PC-9 (cell line): ENCODE measurements at regions of chr2 and their contacts with region 1.

Region 1: GRCh38 chr2:55617175-55618024 is at the start of gene PPP4R3B:
- DNase-seq: peak; percentile 100
- H3K4me3 ChIP-seq: peak within 1 kb of the TSS; percentile 100
- H3K27ac ChIP-seq: peak within 1 kb of the TSS; percentile 90
- H3K4me1 ChIP-seq: peaks cover 23% of the 10 kb centered on the region
- H3K27me3 ChIP-seq: no peaks in the 10 kb centered on the region
- CTCF ChIP-seq: peak; percentile 48; the same call in 1 of the 2 replicates
- total RNA-seq, gene PPP4R3B: 66.2 and 73.4 TPM in 2 replicates

Region 2: GRCh38 chr2:55232084-55232862 is 385.1 kb before region 1 on chr2 and contains the starts of genes CLHC1 and RPS27A:
- CTCF ChIA-PET with region 1: no interaction called
- POLR2A ChIA-PET with region 1: interaction called, 11 read pairs
- intact Hi-C with region 1: loop called (anchors 1 kb)
- DNase-seq: peak; percentile 94 to 98
- H3K4me3 ChIP-seq: peak within 1 kb of the TSS; percentile 97
- H3K27ac ChIP-seq: peak within 1 kb of the TSS; percentile 83
- H3K4me1 ChIP-seq: peaks cover 29% of the 10 kb centered on the region
- H3K27me3 ChIP-seq: no peaks in the 10 kb centered on the region
- CTCF ChIP-seq: peak; percentile 7; the same call in 1 of the 2 replicates
- total RNA-seq, gene CLHC1: 20.5 and 27.1 TPM in 2 replicates
- total RNA-seq, gene RPS27A: 1,269 and 1,616 TPM in 2 replicates

Region 3: DNA sequence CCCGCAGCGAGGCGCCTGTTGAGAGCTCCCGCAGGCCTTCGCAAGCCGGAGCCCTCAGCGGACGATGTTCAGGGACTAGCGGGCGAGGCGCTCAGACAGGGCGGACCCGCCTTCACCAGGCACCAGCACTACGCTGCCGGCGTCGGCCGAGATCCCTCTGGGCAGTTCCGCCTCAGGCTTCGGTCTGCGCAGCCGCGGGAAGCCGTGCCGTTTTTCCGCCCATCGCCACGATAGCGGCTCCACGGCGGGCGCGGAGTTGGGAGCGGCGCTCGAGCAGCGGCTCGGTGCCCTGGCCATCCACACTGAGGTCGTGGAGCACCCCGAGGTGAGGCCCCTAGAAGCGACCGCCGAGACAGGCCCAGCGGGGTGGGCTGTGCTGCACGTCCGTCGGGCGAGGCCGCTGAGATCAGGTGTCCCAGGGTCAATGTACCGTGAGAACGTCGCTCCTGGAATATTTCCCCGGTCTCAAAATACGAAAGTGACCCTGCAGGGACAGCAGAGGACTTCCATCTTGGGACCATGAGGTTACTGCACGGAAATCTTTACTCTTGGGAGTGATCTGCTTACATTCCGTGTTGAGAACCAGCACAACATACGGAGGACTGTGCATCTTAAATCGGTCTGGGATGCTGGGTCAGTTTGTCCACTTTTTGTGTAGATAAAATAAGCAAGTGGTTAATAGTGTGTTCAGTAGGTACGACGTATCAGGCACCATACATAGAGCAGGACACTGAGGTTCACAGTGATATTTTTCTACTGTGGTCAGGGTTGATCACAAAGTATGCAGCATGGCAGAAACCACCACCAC is 335.1 kb before region 1 on chr2:
- CTCF ChIA-PET with region 1: no interaction called
- POLR2A ChIA-PET with region 1: no interaction called
- intact Hi-C with region 1: loop called (anchors 2 kb)
- DNase-seq: peak; percentile 77 to 90
- H3K4me3 ChIP-seq: peak overlapping the region; percentile 80
- H3K27ac ChIP-seq: peak overlapping the region; percentile 40
- H3K4me1 ChIP-seq: peaks cover 12% of the 10 kb centered on the region; the same call in 1 of the 2 replicates
- H3K27me3 ChIP-seq: no peaks in the 10 kb centered on the region
- CTCF ChIP-seq: no peak

Region 4: DNA sequence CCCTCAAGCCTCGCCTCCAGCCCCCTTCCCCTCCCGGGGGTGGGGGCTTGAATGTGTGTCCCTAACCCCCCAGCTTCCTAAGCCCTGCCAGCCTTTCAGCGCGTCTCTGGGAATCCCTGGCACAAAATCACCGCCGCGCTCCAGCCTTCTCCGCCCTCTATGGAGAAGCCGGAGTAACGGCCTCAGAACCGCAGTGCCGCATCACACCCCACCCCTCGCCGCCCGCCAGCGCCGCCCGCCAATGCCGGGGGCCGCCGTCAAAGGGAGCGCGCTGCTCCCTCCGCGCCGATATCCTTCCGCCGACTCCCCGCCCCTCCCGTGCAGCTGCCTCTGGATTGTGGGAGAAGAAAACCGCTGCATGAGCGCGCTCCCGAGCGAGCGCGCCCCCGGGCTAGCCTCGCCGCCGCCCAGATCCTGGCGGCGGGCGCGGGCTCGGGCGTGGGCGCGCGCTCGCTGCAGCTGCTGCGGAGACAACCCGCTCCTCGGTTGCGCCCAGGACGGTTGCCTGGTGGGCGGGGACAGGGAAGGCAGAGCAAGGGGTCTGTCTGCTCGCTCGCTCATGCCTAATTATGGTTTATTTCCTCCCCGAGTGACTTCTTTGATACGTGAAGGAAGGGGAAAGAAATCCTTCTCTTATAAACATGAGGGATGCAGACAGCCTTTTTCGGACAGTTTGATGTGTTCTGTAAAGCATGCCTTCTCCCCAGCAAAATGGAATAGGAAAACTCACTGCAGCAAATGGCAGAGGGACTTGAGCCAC is 197.5 kb before region 1 on chr2 and contains the start of gene CCDC88A:
- CTCF ChIA-PET with region 1: no interaction called
- POLR2A ChIA-PET with region 1: no interaction called
- intact Hi-C with region 1: loop called (anchors 5 kb)
- DNase-seq: peak; percentile 83 to 97
- H3K4me3 ChIP-seq: peak within 1 kb of the TSS; percentile 71
- H3K27ac ChIP-seq: no peak within 1 kb of the TSS
- H3K4me1 ChIP-seq: peaks cover 20% of the 10 kb centered on the region
- H3K27me3 ChIP-seq: no peaks in the 10 kb centered on the region
- CTCF ChIP-seq: peak; percentile 41; the same call in 1 of the 2 replicates
- total RNA-seq, gene CCDC88A: 12.0 and 12.3 TPM in 2 replicates

Region 5: GRCh38 chr2:55560855-55561254 is 56.5 kb before region 1 on chr2:
- CTCF ChIA-PET with region 1: no interaction called
- POLR2A ChIA-PET with region 1: no interaction called
- intact Hi-C with region 1: no loop called
- DNase-seq: no peak
- H3K4me3 ChIP-seq: no peak overlapping the region
- H3K27ac ChIP-seq: no peak overlapping the region
- H3K4me1 ChIP-seq: peaks cover 13% of the 10 kb centered on the region
- H3K27me3 ChIP-seq: no peaks in the 10 kb centered on the region
- CTCF ChIP-seq: no peak

Region 6: GRCh38 chr2:55649211-55649610 is 31.8 kb after region 1 on chr2:
- CTCF ChIA-PET with region 1: no interaction called
- POLR2A ChIA-PET with region 1: no interaction called
- intact Hi-C with region 1: no loop called
- DNase-seq: no peak
- H3K4me3 ChIP-seq: no peak overlapping the region
- H3K27ac ChIP-seq: no peak overlapping the region
- H3K4me1 ChIP-seq: no peaks in the 10 kb centered on the region
- H3K27me3 ChIP-seq: no peaks in the 10 kb centered on the region
- CTCF ChIP-seq: no peak